ENCODE measurements at regions of chr17 and their contacts with region 1.

Region 1: DNA sequence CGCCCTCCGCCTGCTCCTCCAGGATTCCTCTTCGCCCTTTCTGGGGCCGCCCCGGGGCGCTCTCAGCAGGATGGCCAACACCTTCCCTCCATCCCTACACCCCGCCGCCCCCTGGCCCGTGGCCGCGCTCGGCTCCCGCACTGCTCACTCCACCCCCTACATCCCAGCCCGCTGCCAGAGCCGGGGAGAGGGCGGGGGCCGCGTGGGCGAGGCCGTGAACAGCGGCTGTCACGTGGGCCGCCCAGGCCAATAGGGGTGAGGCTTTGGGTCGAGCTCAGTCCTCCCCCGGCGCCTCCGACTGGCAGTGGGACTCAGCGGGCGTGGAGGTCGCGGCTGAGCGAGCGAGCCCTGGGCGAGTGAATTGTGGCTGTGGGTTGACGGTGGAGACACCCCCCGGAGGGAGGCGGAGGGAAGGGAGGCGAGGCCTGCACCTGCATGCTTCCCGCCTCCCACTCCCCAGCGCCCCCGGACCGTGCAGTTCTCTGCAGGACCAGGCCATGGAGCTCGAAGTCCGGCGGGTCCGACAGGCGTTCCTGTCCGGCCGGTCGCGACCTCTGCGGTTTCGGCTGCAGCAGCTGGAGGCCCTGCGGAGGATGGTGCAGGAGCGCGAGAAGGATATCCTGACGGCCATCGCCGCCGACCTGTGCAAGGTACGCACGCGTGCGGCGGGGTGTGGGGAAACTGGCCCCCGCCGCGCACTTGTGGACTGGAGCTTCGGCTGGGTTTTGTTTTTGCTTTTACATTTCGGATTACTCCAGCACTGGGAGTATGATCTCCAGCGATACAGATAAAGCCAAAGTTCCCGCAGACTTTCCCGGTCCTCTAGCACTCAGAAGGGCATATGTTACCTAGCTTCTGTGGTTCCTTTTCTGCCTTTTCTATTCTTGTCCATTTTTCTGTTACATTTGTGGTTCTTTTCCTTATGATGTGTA is at the start of gene ALDH3A2:
- DNase-seq: peak; percentile 81 to 95 (median 92)
- ATAC-seq: peak; percentile 91
- H3K4me3 ChIP-seq: peak within 1 kb of the TSS; percentile 82 to 94
- H3K4me3 Mint-ChIP-seq: peak within 1 kb of the TSS; percentile 96
- H3K27ac ChIP-seq: peak within 1 kb of the TSS; percentile 57 to 69
- H3K27ac Mint-ChIP-seq: peak within 1 kb of the TSS; percentile 96
- H3K4me1 ChIP-seq: peaks cover 21% of the 10 kb centered on the region
- H3K4me1 Mint-ChIP-seq: peaks cover 43% of the 10 kb centered on the region
- H3K27me3 ChIP-seq: no peaks in the 10 kb centered on the region
- H3K27me3 Mint-ChIP-seq: no peaks in the 10 kb centered on the region
- CTCF ChIP-seq: no peak
- total RNA-seq, gene ALDH3A2: 14.9 to 16.6 TPM

Region 2: GRCh38 chr17:19457830-19458271 is 190.9 kb before region 1 on chr17:
- CTCF ChIA-PET with region 1: no interaction called
- POLR2A ChIA-PET with region 1: no interaction called
- intact Hi-C with region 1: loop called in 1 of 2 experiments (anchors 5 kb)
- DNase-seq: peak in 1 of 9 experiments; percentile 31
- ATAC-seq: no peak
- H3K4me3 ChIP-seq: no peak overlapping the region
- H3K4me3 Mint-ChIP-seq: no peak overlapping the region
- H3K27ac ChIP-seq: no peak overlapping the region
- H3K27ac Mint-ChIP-seq: no peak overlapping the region
- H3K4me1 ChIP-seq: peaks cover 11% of the 10 kb centered on the region
- H3K4me1 Mint-ChIP-seq: peaks cover 22% of the 10 kb centered on the region
- H3K27me3 ChIP-seq: no peaks in the 10 kb centered on the region
- H3K27me3 Mint-ChIP-seq: peaks cover 3% of the 10 kb centered on the region
- CTCF ChIP-seq: no peak

Region 3: GRCh38 chr17:19513897-19514488 is 134.7 kb before region 1 on chr17:
- CTCF ChIA-PET with region 1: interaction called, 5 read pairs
- POLR2A ChIA-PET with region 1: no interaction called
- intact Hi-C with region 1: loop called (anchors 1 to 2 kb)
- DNase-seq: peak; percentile 30 to 81 (median 69)
- ATAC-seq: peak; percentile 70
- H3K4me3 ChIP-seq: no peak overlapping the region
- H3K4me3 Mint-ChIP-seq: no peak overlapping the region
- H3K27ac ChIP-seq: no peak overlapping the region
- H3K27ac Mint-ChIP-seq: no peak overlapping the region
- H3K4me1 ChIP-seq: no peaks in the 10 kb centered on the region
- H3K4me1 Mint-ChIP-seq: no peaks in the 10 kb centered on the region
- H3K27me3 ChIP-seq: no peaks in the 10 kb centered on the region
- H3K27me3 Mint-ChIP-seq: no peaks in the 10 kb centered on the region
- CTCF ChIP-seq: peak; percentile 89

Region 4: DNA sequence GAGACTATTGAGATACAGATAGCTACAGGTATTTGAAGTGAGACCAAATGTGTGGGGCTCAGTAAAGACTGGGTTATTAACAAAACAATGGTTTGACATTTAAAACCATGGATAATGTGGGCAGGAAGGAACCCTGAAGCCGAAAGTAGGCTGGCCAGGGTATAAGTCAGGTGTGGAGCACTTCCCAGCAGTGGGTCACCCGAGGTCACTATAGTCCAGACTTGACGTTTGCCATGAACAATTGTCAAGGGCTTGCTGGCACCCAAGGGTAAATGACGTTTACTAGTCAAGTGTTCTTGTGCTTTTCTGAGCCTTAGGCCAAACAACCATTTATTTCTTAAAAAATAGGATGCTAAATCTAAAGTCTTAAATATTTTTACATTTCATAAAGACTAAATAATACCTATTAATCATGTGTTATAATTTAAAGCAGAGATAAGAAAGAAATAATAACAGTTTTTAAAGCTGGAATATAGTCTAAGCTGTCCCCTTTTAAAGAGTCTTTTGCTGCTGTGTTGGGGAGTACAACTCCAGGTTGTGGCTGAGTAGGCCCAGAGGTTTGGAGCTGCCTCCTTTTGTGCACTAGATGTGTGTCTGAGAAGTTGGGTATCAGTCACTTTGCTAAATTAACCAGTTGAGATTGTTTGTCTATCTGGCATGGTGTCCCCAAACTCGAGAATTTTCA is 15.5 kb after region 1 on chr17:
- CTCF ChIA-PET with region 1: no interaction called
- POLR2A ChIA-PET with region 1: no interaction called
- intact Hi-C with region 1: no loop called
- DNase-seq: no peak
- ATAC-seq: no peak
- H3K4me3 ChIP-seq: no peak overlapping the region
- H3K4me3 Mint-ChIP-seq: no peak overlapping the region
- H3K27ac ChIP-seq: no peak overlapping the region
- H3K27ac Mint-ChIP-seq: no peak overlapping the region
- H3K4me1 ChIP-seq: no peaks in the 10 kb centered on the region
- H3K4me1 Mint-ChIP-seq: no peaks in the 10 kb centered on the region
- H3K27me3 ChIP-seq: no peaks in the 10 kb centered on the region
- H3K27me3 Mint-ChIP-seq: no peaks in the 10 kb centered on the region
- CTCF ChIP-seq: no peak

Region 5: DNA sequence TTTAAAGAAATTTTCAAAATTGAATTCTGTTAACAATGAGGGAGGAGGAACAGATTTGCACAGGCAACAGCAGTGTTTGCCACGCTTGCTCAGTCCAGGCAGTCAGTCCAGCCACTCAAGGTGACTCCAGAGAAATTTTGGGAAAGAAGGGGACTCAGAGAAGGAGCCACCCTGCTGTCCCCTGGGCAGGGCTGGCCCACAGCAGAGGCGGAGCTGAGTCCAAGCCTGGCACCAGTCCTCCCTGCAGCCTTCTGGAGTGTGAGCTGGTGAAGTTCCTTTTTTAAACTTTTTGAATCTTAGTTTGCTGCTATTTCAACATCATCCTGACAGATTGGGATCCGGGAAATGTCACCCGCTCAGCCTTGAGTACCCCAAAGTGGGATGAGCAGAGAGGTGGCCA is 82.1 kb after region 1 on chr17:
- CTCF ChIA-PET with region 1: no interaction called
- POLR2A ChIA-PET with region 1: no interaction called
- intact Hi-C with region 1: no loop called
- DNase-seq: no peak
- ATAC-seq: no peak
- H3K4me3 ChIP-seq: no peak overlapping the region
- H3K4me3 Mint-ChIP-seq: no peak overlapping the region
- H3K27ac ChIP-seq: no peak overlapping the region
- H3K27ac Mint-ChIP-seq: no peak overlapping the region
- H3K4me1 ChIP-seq: no peaks in the 10 kb centered on the region
- H3K4me1 Mint-ChIP-seq: peaks cover 7% of the 10 kb centered on the region
- H3K27me3 ChIP-seq: no peaks in the 10 kb centered on the region
- H3K27me3 Mint-ChIP-seq: no peaks in the 10 kb centered on the region
- CTCF ChIP-seq: no peak

Region 6: DNA sequence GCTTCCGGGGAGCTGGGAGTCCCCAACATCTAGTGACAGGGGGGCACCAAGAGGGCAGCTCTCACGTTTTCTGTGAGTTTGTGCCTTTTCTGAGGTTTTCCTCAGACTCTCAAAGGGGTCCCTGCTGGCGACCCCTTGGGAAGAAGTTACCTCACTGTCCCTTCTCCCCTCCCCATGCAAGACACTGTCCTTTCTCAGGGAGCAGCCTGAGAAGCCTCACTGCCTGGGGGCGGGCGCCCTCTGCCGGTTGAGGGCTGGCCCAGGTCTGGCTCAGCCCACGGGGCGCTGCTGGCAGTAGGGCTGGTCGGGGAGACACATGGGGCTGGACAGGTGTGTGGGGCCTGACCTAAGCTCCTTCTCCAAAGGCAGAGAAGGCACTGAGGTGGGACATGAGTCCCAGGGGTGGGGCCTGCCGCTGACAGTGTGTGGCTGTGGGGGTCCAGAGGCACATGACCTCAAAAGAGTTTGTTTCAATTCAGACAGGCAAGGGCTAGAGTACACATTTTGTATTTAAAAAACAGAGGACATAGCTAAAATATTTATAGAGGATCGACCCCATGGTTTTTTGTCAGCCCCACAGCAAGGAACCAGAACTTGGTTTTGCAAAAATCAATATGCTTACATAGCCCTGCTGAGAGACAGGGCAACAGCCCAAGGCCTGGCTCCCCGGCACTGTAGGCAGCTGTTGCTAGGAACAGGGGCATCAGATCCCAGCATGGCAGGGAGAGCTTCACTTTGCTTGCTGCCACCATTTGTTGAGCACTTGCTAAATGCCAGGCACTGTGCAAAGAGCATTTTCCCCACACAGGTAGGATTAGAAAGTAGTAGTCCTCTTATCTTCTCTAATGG is 117.9 kb after region 1 on chr17:
- CTCF ChIA-PET with region 1: interaction called, 12 read pairs
- POLR2A ChIA-PET with region 1: interaction called, 5 read pairs
- intact Hi-C with region 1: loop called in 1 of 2 experiments (anchors 5 kb)
- DNase-seq: peak; percentile 55 to 90 (median 78)
- ATAC-seq: peak; percentile 92
- H3K4me3 ChIP-seq: no peak overlapping the region
- H3K4me3 Mint-ChIP-seq: no peak overlapping the region
- H3K27ac ChIP-seq: no peak overlapping the region
- H3K27ac Mint-ChIP-seq: no peak overlapping the region
- H3K4me1 ChIP-seq: peaks cover 22% of the 10 kb centered on the region
- H3K4me1 Mint-ChIP-seq: peaks cover 22% of the 10 kb centered on the region
- H3K27me3 ChIP-seq: no peaks in the 10 kb centered on the region
- H3K27me3 Mint-ChIP-seq: peaks cover 7% of the 10 kb centered on the region
- CTCF ChIP-seq: peak; percentile 93

Region 7: DNA sequence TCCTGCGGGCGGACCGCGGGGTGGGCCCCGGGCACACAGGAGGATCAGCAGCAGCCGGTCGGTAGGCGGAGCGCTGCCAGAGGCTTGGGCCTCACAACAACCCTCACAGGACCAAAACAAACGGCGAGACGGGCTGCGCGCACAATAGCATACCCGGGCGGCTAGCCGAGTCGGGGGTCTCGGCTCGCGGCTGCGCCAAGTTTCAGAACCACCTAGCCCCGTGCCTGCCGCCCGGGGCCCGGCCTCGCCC is 218.2 kb after region 1 on chr17:
- CTCF ChIA-PET with region 1: no interaction called
- POLR2A ChIA-PET with region 1: no interaction called
- intact Hi-C with region 1: loop called in 1 of 2 experiments (anchors 5 kb)
- DNase-seq: peak; percentile 19 to 74 (median 49)
- ATAC-seq: peak; percentile 50
- H3K4me3 ChIP-seq: peak overlapping the region; percentile 68 to 80
- H3K4me3 Mint-ChIP-seq: peak overlapping the region; percentile 81
- H3K27ac ChIP-seq: peak overlapping the region; percentile 54 to 68
- H3K27ac Mint-ChIP-seq: peak overlapping the region; percentile 79
- H3K4me1 ChIP-seq: peaks cover 46% of the 10 kb centered on the region
- H3K4me1 Mint-ChIP-seq: peaks cover 42% of the 10 kb centered on the region
- H3K27me3 ChIP-seq: no peaks in the 10 kb centered on the region
- H3K27me3 Mint-ChIP-seq: no peaks in the 10 kb centered on the region
- CTCF ChIP-seq: peak; percentile 3